Activated naive CD4-positive, alpha-beta T cell treated with anti-CD3 and anti-CD28 coated beads for 36 hours (primary cell): ENCODE measurements at regions of chr14 and their contacts with region 1.

Region 1: DNA sequence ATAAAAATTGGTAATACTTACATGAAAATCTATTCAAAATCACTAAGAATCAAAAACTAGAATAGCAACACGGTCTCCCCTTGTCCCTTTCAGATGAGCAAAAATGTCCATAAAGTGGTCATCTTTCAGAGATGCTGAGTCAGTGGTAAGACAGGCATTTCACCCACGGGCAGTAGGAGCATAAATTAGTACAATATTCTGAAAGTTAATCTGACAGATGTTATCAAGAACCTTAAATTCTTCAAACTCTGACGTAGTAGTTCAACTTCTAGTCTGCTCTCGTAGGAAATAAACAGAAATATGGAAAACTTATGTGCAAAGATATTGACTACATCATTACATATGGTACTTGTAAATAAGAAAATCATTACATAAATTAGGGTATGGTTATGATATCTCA is 33.1 kb upstream of the GNPNAT1 start:
- DNase-seq: no peak
- H3K4me3 Mint-ChIP-seq: no peak overlapping the region
- H3K27ac Mint-ChIP-seq: no peak overlapping the region
- H3K4me1 Mint-ChIP-seq: peaks cover 2% of the 10 kb centered on the region
- H3K27me3 Mint-ChIP-seq: peaks cover 1% of the 10 kb centered on the region

Region 2: DNA sequence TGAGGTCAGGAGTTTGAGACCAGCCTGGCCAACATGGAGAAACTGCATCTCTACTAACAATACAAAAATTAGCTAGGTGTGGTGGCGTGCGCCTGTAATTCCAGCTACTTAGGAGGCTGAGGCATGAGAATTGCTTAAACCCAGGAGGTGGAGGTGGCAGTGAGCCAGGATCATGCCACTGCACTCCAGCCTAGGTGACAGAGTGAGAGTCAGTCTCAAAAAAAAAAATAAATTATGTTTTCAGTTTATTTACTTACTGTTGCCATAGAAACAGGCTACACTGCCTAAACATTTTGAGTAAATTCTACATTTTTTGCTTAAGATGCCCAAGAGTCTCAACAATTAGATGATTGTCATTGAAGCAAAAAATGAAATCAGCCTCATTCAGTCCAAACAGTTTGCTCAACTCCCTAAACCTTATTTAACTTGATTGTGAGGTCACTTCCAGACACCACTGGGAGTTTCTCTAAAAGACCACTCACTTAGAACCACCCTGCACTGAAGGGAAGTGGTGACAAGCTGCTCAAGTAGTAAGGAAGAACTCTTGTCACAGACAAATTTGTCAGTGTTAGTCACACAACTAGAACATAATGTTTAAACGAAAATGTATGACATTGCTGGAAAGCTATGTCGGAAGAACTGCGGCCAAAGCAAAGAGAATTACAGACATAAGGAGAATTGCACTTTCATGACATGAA is 23.3 kb before region 1 on chr14:
- CTCF ChIA-PET with region 1: no interaction called
- intact Hi-C with region 1: no loop called
- DNase-seq: no peak
- H3K4me3 Mint-ChIP-seq: no peak overlapping the region
- H3K27ac Mint-ChIP-seq: no peak overlapping the region
- H3K4me1 Mint-ChIP-seq: peaks cover 11% of the 10 kb centered on the region
- H3K27me3 Mint-ChIP-seq: no peaks in the 10 kb centered on the region

Region 3: DNA sequence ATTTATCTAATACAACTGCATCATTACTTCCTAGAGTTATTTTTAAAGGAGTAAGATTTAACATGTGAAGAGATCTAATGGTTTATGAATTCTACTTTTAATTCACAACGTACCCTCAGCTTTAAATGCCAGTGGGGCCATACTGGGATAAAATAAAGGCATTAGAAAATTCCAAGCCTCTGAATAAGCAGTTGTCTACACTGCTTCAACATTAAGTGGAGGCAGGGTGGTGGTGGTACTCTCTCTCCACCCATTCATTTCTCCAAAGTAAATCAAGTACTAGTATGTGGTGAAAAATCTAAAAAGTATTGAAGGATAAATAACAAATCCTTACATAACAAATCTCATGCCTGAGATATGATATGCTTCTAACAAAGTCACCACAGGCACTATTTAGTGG is 74.0 kb after region 1 on chr14:
- CTCF ChIA-PET with region 1: no interaction called
- intact Hi-C with region 1: no loop called
- DNase-seq: no peak
- H3K4me3 Mint-ChIP-seq: no peak overlapping the region
- H3K27ac Mint-ChIP-seq: no peak overlapping the region
- H3K4me1 Mint-ChIP-seq: peaks cover 5% of the 10 kb centered on the region
- H3K27me3 Mint-ChIP-seq: no peaks in the 10 kb centered on the region

Region 4: DNA sequence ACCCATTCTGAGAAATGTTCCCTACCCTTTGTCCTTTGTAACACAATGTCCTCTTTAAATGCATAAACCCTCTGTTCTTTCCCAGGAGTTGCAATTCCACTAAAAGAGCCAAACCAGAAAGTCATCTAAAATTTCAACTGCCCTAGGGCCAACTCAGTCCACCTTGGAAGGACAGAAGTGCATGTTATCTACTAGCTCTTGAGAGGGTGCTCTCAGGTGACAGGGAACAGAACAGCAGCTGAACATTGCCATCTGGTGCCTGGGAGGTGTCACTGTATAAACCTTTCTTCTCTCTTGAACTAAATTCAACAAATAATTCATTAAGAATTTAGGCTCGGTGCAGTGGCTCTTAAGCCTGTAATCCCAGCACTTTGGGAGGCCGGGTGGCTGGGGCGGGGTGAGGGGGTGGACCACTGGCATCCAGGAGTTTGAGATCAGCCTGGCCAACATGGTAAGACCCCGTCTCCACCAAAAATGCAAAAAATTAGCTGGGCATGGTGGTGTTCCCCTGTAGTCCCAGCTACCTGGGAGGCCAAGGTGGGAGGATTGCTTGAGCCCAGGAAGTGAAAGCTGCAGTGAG is 136.6 kb after region 1 on chr14:
- CTCF ChIA-PET with region 1: interaction called, 23 read pairs
- intact Hi-C with region 1: loop called (anchors 1 kb)
- DNase-seq: peak; percentile 73
- H3K4me3 Mint-ChIP-seq: no peak overlapping the region
- H3K27ac Mint-ChIP-seq: no peak overlapping the region
- H3K4me1 Mint-ChIP-seq: peaks cover 6% of the 10 kb centered on the region
- H3K27me3 Mint-ChIP-seq: peaks cover 2% of the 10 kb centered on the region

Region 5: DNA sequence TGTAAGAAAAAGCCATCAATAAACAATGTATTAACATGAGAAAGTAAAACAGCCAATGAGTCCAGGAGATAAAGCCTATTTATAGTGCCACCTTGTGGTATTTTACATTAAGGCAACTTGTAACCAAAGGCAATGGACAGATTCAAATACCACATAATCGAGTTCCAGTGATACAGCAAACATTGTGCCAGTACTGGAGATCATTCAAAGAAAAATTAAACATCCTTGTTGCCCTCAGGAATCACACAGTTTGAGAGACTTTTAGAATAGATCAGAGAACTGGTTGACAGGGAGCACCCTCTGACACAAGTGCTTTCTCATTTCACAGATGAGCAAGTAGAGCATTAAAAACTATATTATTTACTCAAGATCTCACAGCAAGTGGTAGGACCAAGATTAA is 230.5 kb after region 1 on chr14:
- CTCF ChIA-PET with region 1: interaction called, 4 read pairs
- intact Hi-C with region 1: loop called (anchors 1 kb)
- DNase-seq: no peak
- H3K4me3 Mint-ChIP-seq: no peak overlapping the region
- H3K27ac Mint-ChIP-seq: no peak overlapping the region
- H3K4me1 Mint-ChIP-seq: peaks cover 3% of the 10 kb centered on the region
- H3K27me3 Mint-ChIP-seq: no peaks in the 10 kb centered on the region

Region 6: DNA sequence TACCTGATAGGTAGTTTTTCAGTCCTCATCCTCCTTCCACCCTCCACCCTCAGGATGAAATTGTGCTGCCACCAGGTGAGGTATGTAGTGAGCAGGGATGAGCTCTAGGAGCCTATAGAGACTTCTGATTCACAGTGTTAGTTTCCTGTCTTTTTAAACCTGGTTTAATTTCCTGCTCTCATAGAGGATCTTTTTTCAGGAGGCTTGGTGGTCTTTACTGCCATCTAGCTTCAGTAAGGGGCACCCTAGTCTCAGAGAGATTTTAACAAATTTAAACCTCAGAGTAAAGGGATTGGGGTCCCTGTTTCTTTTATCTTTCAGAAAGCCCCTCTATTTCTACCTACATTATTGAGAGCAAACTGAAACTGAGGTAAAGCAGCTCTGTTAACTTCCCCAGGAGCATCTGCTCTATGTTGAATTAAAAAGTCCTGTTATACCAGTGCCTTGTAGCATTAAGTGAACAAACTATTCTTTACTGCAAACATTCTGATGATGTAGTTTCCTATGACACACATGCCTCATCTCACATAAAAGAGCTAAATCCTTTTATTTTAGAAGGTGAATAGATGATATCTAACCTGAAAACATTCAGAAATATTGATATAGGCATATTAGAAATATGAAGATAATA is 500.8 kb after region 1 on chr14:
- CTCF ChIA-PET with region 1: interaction called, 4 read pairs
- intact Hi-C with region 1: loop called (anchors 5 kb)
- DNase-seq: no peak
- H3K4me3 Mint-ChIP-seq: no peak overlapping the region
- H3K27ac Mint-ChIP-seq: no peak overlapping the region
- H3K4me1 Mint-ChIP-seq: no peaks in the 10 kb centered on the region
- H3K27me3 Mint-ChIP-seq: no peaks in the 10 kb centered on the region